ENCODE measurements at regions of chr1 and their contacts with region 1.

Region 1: DNA sequence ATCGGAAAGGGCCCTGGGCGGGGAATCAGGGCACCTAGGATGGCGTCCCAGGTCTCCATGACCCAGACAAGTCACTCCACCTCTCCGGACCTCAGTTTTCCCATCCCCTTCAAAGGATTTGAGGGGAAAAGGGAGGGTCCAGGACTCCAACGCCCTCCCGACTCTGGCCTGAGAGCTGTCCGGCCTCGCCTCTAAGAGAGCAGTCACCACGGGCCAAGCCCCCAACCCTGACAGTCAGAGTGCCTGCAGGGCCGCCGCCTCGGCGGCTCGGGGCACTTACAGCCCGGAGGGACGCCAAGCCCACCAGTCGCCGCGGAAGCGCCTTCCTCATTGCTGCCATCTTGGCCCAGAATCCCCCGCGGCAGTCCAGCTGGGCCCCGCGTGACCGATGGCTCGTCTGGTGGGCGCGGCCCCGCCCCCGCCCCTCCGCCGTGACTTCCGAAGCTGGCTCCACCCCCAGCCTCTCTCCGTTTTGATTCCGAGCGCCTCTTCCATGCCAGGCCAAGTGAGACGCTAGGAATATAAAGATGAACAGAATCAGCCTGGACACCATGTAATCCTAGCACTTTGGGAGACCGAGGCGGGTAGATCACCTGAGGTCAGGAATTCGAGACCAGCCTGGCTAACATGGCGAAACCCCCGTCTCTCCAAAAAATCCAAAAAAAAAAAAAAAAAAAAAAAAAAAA is at the start of gene HMGCL:
- DNase-seq: peak; percentile 86
- H3K4me3 Mint-ChIP-seq: peak within 1 kb of the TSS; percentile 90
- H3K27ac Mint-ChIP-seq: peak within 1 kb of the TSS; percentile 92
- H3K4me1 Mint-ChIP-seq: peaks cover 11% of the 10 kb centered on the region
- H3K27me3 Mint-ChIP-seq: no peaks in the 10 kb centered on the region
- CTCF ChIP-seq: no peak
- total RNA-seq, gene HMGCL: 30.4 and 39.3 TPM in 2 replicates

Region 2: DNA sequence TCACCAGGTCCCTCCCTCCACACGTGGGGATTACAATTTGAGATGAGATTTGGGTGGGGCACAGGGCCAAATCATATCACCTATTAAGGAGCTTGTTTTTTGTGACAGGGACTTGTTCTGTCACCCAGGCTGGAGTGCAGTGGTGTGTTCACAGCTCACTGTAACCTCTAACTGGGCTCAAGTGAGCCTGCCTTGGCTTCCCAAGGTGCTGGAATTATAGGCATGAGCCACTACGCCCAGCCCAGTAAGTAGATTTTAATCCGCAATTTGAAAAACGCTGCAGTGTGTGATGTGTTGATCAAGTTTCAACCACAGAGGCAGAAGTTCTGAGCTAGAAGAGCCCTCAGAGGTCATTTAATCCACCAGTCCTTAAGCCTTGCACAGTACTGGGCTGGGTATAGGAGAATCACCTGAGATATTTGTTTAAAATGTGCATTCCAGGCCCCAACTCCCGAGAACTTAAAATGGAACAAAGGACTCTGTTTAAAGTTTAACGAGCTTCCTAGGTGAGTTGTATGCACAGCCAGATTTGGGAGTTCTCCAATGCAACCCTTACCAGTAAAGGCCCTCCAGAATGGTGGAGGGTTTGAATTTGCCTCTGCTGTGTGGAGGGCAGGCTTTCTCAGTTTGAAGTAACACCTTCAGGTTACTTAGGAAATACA is 120.3 kb before region 1 on chr1:
- CTCF ChIA-PET with region 1: no interaction called
- POLR2A ChIA-PET with region 1: no interaction called
- intact Hi-C with region 1: no loop called
- DNase-seq: no peak
- H3K4me3 Mint-ChIP-seq: no peak overlapping the region
- H3K27ac Mint-ChIP-seq: no peak overlapping the region
- H3K4me1 Mint-ChIP-seq: peaks cover 6% of the 10 kb centered on the region
- H3K27me3 Mint-ChIP-seq: no peaks in the 10 kb centered on the region
- CTCF ChIP-seq: no peak

Region 3: DNA sequence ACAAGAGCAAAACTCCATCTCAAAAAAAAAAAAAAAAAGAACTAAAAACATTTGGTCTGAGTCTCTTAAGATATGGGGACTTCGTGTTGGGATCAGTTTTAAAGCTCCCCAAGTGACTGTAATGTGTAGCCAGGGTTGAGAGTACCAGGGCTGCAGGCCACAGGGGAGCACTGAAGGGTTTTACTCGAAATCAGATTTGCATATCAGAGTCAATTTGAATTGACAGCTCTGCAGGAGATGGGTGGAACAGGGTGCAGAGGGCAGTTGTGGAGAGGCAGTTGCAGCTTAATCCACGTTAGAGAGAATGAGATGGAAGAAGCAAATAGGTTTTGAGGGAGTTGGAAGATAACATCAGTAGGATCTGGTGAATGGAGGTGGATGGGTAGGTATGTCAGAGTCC is 102.6 kb before region 1 on chr1:
- CTCF ChIA-PET with region 1: no interaction called
- POLR2A ChIA-PET with region 1: no interaction called
- intact Hi-C with region 1: no loop called
- DNase-seq: no peak
- H3K4me3 Mint-ChIP-seq: no peak overlapping the region
- H3K27ac Mint-ChIP-seq: no peak overlapping the region
- H3K4me1 Mint-ChIP-seq: peaks cover 22% of the 10 kb centered on the region
- H3K27me3 Mint-ChIP-seq: no peaks in the 10 kb centered on the region
- CTCF ChIP-seq: no peak

Region 4: DNA sequence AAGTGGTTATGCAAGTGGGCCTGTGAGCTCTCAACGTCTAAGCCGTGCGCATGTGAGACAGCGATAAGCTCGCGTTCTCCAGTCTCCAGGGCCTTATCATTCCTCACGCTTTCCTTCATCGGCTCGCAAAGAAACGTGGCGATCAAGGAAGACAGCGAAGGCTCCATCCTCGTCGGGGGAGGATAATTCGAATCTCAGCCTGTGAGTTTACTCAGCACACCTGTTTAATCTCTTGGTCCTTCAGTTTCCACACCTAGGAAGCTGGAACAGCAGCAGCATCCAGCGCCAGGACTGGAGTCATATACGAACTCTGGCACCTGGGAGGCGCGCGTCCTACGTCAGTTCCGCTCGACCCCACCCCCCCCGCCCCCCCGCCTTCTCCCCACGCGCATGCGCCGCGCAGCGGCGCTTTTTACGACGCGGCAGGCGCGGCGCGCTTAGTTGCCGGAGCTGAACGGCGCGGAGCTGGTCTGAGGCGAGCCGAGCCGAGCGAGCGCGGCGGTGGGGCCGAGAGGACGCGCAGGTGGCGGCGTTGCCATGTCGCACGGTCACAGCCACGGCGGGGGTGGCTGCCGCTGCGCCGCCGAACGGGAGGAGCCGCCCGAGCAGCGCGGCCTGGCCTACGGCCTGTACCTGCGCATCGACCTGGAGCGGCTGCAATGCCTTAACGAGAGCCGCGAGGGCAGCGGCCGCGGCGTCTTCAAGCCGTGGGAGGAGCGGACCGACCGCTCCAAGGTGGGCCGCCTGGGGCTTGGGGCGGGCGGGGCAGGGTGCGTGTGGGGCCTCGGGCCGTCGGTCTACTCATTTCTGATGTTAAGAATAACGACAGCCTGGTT is 47.0 kb before region 1 on chr1 and contains the start of gene PITHD1:
- CTCF ChIA-PET with region 1: no interaction called
- POLR2A ChIA-PET with region 1: interaction called, 22 read pairs
- intact Hi-C with region 1: no loop called
- DNase-seq: peak; percentile 84
- H3K4me3 Mint-ChIP-seq: peak within 1 kb of the TSS; percentile 88
- H3K27ac Mint-ChIP-seq: peak within 1 kb of the TSS; percentile 96
- H3K4me1 Mint-ChIP-seq: peaks cover 12% of the 10 kb centered on the region
- H3K27me3 Mint-ChIP-seq: no peaks in the 10 kb centered on the region
- CTCF ChIP-seq: no peak
- total RNA-seq, gene PITHD1: 37.7 and 37.8 TPM in 2 replicates

Region 5: GRCh38 chr1:23790696-23791515 is 34.3 kb before region 1 on chr1 and contains the start of gene LYPLA2:
- CTCF ChIA-PET with region 1: no interaction called
- POLR2A ChIA-PET with region 1: interaction called, 13 read pairs
- intact Hi-C with region 1: no loop called
- DNase-seq: peak; percentile 91
- H3K4me3 Mint-ChIP-seq: peak within 1 kb of the TSS; percentile 100
- H3K27ac Mint-ChIP-seq: peak within 1 kb of the TSS; percentile 94
- H3K4me1 Mint-ChIP-seq: peaks cover 23% of the 10 kb centered on the region
- H3K27me3 Mint-ChIP-seq: no peaks in the 10 kb centered on the region
- CTCF ChIP-seq: no peak
- total RNA-seq, gene LYPLA2: 27.8 and 35.7 TPM in 2 replicates

Region 6: GRCh38 chr1:23800400-23801337 is 24.6 kb before region 1 on chr1 and contains the start of gene GALE:
- CTCF ChIA-PET with region 1: interaction called, 8 read pairs
- POLR2A ChIA-PET with region 1: interaction called, 43 read pairs
- intact Hi-C with region 1: no loop called
- DNase-seq: peak; percentile 96
- H3K4me3 Mint-ChIP-seq: peak within 1 kb of the TSS; percentile 90
- H3K27ac Mint-ChIP-seq: peak within 1 kb of the TSS; percentile 91
- H3K4me1 Mint-ChIP-seq: no peaks in the 10 kb centered on the region
- H3K27me3 Mint-ChIP-seq: no peaks in the 10 kb centered on the region
- CTCF ChIP-seq: no peak
- total RNA-seq, gene GALE: 112 and 143 TPM in 2 replicates

Region 7: GRCh38 chr1:23809751-23810171 is 15.5 kb before region 1 on chr1:
- CTCF ChIA-PET with region 1: interaction called, 44 read pairs
- POLR2A ChIA-PET with region 1: interaction called, 15 read pairs
- intact Hi-C with region 1: no loop called
- DNase-seq: peak; percentile 77
- H3K4me3 Mint-ChIP-seq: no peak overlapping the region
- H3K27ac Mint-ChIP-seq: no peak overlapping the region
- H3K4me1 Mint-ChIP-seq: peaks cover 14% of the 10 kb centered on the region
- H3K27me3 Mint-ChIP-seq: no peaks in the 10 kb centered on the region
- CTCF ChIP-seq: peak; percentile 72

Region 8: DNA sequence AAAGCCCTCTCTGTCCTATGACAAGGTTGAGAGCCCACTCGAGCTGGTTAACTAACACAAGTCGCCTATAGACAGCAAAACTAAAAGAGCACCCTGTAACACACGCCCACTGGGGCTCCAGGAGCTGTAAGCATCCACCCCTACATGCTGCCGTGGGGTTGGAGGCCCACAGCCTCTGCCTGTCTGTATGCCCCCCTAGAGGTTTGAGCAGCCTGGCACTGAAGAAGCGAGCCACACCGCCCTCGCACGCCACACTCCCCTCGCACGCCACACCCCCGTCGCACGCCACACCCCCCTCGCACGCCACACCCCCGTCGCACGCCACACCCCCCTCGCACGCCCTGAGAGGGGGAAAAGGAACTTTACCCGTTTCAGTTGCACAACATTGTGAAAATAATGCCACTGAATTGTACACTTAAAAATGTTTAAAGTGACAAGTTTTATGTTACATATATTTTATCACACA is 13.2 kb after region 1 on chr1:
- CTCF ChIA-PET with region 1: interaction called, 4 read pairs
- POLR2A ChIA-PET with region 1: interaction called, 18 read pairs
- intact Hi-C with region 1: no loop called
- DNase-seq: peak; percentile 61
- H3K4me3 Mint-ChIP-seq: peak overlapping the region; percentile 67
- H3K27ac Mint-ChIP-seq: no peak overlapping the region
- H3K4me1 Mint-ChIP-seq: no peaks in the 10 kb centered on the region
- H3K27me3 Mint-ChIP-seq: peaks cover 22% of the 10 kb centered on the region
- CTCF ChIP-seq: no peak